WTC11 (cell line): ENCODE measurements at regions of chr1 and their contacts with region 1.

Region 1: DNA sequence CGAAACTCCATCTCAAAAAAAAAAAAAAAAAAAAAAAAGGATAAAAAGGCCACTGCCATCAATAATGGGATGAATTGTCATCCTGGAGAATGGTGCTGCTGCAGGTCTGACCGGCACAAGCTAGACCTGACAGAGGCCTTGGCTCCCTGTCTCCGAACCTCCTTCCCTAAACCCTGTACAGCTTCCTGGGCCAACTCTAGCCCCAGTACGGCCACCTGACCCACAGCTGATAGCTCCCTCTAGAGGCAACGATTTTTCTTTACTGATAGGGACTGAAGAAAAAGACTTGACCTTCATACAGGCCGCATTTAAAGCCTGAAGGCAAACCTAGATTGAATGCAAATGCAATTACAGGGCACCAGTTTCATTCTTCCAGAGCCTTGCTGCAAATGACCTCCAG is 30.7 kb downstream of the NOL9 start:
- DNase-seq: peak; percentile 60
- ATAC-seq: peak; percentile 67
- H3K4me3 Mint-ChIP-seq: no peak overlapping the region
- H3K27ac Mint-ChIP-seq: peak overlapping the region; percentile 67
- H3K4me1 Mint-ChIP-seq: peaks cover 30% of the 10 kb centered on the region
- H3K27me3 Mint-ChIP-seq: no peaks in the 10 kb centered on the region
- CTCF ChIP-seq: peak; percentile 41

Region 2: GRCh38 chr1:6287431-6287886 is 236.1 kb before region 1 on chr1:
- CTCF ChIA-PET with region 1: no interaction called
- POLR2A ChIA-PET with region 1: no interaction called
- DNase-seq: no peak
- ATAC-seq: no peak
- H3K4me3 Mint-ChIP-seq: no peak overlapping the region
- H3K27ac Mint-ChIP-seq: peak overlapping the region; percentile 72
- H3K4me1 Mint-ChIP-seq: no peaks in the 10 kb centered on the region
- H3K27me3 Mint-ChIP-seq: no peaks in the 10 kb centered on the region
- CTCF ChIP-seq: no peak

Region 3: GRCh38 chr1:6489799-6490180 is 33.8 kb before region 1 on chr1:
- CTCF ChIA-PET with region 1: interaction called, 179 read pairs
- POLR2A ChIA-PET with region 1: no interaction called
- DNase-seq: peak; percentile 87
- ATAC-seq: peak; percentile 46
- H3K4me3 Mint-ChIP-seq: peak overlapping the region; percentile 77
- H3K27ac Mint-ChIP-seq: no peak overlapping the region
- H3K4me1 Mint-ChIP-seq: peaks cover 30% of the 10 kb centered on the region
- H3K27me3 Mint-ChIP-seq: peaks cover 2% of the 10 kb centered on the region; the same call in 1 of the 2 replicates
- CTCF ChIP-seq: peak; percentile 99

Region 4: DNA sequence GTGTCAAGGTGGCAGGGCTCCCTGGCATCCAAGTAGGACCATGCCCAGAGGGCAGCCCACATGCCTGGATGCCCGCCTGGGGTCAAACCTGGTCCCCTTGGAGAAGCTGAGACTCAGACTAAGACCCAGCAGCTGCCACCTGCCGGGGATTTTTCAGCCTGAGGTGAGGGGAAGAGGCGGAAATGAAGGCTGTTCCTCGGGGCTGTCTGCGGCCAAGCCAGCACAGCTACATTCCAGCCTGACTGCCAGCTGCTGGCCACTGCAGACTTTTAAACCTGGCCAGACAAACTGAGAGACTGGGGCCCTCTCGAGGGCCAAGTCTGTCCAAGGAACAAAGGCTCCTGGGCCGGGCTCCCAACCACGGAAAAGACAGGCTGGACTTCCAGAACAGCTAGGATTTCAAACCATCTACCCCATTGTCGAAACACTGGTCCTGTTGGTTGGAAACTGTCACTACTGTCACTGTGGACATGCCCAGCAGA is 10.2 kb before region 1 on chr1:
- CTCF ChIA-PET with region 1: interaction called, 12 read pairs
- POLR2A ChIA-PET with region 1: no interaction called
- DNase-seq: no peak
- ATAC-seq: no peak
- H3K4me3 Mint-ChIP-seq: no peak overlapping the region
- H3K27ac Mint-ChIP-seq: no peak overlapping the region
- H3K4me1 Mint-ChIP-seq: no peaks in the 10 kb centered on the region
- H3K27me3 Mint-ChIP-seq: no peaks in the 10 kb centered on the region
- CTCF ChIP-seq: no peak

Region 5: DNA sequence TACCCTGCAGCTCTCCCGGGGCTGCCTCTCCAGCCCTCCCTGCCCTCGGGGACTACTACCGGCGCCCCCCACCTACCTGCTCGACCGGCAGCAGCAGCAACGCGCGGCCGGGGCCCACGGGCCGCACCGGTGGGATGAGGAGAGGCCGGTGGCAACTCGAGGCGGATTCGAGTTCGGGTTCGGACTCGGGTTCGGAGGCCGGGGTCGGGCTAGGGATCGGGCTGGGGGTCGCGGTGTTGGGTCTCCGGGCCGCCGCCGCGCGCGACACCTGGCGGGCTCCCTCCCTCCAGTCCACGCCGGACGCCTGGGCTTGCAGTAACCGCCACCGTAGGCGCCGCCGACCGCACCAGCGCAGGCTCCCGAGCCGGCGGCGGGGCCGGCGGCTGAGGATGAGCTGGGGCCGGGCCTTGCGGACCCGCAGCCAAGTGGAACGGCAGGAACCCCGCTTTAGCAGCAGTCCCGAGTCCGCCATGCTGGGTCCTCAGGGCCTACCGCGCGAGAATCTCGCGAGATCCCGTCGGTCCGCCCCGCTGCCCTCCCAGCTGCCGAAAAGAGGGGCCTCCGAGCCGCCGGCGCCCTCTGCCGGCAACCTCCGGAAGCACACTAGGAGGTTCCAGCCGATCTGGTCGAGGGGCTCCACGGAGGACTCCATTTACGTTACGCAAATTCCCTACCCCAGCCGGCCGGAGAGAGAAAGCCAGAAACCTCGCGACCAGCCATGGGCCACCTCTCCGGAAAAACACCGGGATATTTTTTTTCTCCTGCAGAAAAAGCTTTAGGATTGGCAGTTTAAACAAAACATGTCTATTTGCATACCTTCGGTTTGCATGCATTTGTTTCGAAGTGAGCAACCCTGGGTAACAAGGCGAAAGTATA is 30.7 kb after region 1 on chr1 and contains the start of gene NOL9:
- CTCF ChIA-PET with region 1: interaction called, 21 read pairs
- POLR2A ChIA-PET with region 1: no interaction called
- DNase-seq: peak; percentile 97
- ATAC-seq: peak; percentile 93
- H3K4me3 Mint-ChIP-seq: peak within 1 kb of the TSS; percentile 84
- H3K27ac Mint-ChIP-seq: no peak within 1 kb of the TSS
- H3K4me1 Mint-ChIP-seq: peaks cover 12% of the 10 kb centered on the region
- H3K27me3 Mint-ChIP-seq: no peaks in the 10 kb centered on the region; the same call in 1 of the 2 replicates
- CTCF ChIP-seq: peak; percentile 87
- total RNA-seq, gene NOL9: 36.0 to 37.4 TPM (median 37.4 TPM) in 3 replicates

Region 6: GRCh38 chr1:6579374-6580118 is 56.0 kb after region 1 on chr1 and contains the start of gene ZBTB48:
- CTCF ChIA-PET with region 1: no interaction called
- POLR2A ChIA-PET with region 1: no interaction called
- DNase-seq: peak; percentile 99
- ATAC-seq: peak; percentile 98
- H3K4me3 Mint-ChIP-seq: peak within 1 kb of the TSS; percentile 85
- H3K27ac Mint-ChIP-seq: peak within 1 kb of the TSS; percentile 84
- H3K4me1 Mint-ChIP-seq: peaks cover 17% of the 10 kb centered on the region
- H3K27me3 Mint-ChIP-seq: no peaks in the 10 kb centered on the region
- CTCF ChIP-seq: no peak
- total RNA-seq, gene ZBTB48: 29.1 to 37.5 TPM (median 31.0 TPM) in 3 replicates